AG04449 (cell line): ENCODE measurements at regions of chr3 and their contacts with region 1.

Region 1: DNA sequence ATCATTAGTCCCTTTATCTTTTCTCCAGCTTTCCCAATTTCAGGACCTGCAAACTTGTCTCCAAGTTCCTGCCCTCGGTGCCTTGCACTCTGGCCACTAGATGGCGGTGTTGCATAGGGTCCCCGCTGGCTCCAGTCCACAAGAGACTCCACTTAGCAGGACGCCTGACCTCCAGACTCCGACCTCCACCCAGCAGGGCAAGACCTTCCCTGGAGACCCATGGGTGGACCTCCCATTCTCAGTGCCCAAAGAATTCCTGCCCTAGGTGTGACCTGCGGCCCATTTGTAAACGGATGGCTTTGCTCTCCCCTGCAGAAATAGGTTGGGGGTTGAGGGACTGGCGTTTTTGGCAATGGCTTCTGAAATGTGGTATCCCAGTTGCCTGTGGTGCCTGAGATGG is 82.6 kb downstream of the LSM3 start:
- DNase-seq: no peak
- H3K4me3 ChIP-seq: no peak overlapping the region; the same call in 1 of the 2 replicates
- CTCF ChIP-seq: peak; percentile 97

Region 2: DNA sequence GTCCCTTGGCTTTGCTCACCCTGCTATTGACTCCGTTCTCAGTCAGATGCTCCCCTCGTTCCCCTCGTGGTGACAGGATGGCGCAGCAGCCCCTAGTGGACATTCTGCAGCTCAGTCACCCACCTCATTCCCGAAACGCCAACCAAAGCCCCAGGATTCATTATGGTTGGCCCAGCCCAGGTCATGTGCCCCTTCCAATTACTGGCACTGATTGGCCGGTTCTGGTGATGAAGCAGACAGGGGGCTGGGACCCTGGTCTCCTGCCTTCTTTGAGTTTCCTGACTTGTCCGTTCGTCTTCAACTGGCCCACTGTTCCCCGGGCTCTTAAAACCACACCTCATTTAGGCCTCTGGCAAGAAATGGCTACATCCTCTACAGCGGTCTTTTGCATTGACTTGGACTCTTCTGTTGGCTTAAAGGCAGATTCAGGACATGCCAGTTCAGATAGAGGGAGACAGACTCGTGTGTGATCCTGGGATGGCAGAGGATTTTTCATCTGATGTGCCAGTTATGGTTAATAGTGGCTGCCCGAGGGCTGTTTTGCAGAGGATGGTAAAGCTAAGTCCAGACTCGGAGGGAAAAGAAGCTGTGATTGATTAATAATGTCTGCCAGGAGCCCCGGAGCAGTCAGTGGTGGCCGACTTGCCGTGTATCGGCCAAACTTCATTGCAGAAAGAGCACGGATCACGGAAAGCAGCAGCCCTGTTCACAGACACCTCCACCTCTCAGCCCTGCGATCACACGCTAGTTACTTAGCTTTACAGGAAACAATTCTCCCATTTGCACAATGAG is 44.8 kb before region 1 on chr3:
- CTCF ChIA-PET with region 1: interaction called, 40 read pairs
- POLR2A ChIA-PET with region 1: no interaction called
- DNase-seq: no peak
- H3K4me3 ChIP-seq: no peak overlapping the region
- CTCF ChIP-seq: no peak

Region 3: DNA sequence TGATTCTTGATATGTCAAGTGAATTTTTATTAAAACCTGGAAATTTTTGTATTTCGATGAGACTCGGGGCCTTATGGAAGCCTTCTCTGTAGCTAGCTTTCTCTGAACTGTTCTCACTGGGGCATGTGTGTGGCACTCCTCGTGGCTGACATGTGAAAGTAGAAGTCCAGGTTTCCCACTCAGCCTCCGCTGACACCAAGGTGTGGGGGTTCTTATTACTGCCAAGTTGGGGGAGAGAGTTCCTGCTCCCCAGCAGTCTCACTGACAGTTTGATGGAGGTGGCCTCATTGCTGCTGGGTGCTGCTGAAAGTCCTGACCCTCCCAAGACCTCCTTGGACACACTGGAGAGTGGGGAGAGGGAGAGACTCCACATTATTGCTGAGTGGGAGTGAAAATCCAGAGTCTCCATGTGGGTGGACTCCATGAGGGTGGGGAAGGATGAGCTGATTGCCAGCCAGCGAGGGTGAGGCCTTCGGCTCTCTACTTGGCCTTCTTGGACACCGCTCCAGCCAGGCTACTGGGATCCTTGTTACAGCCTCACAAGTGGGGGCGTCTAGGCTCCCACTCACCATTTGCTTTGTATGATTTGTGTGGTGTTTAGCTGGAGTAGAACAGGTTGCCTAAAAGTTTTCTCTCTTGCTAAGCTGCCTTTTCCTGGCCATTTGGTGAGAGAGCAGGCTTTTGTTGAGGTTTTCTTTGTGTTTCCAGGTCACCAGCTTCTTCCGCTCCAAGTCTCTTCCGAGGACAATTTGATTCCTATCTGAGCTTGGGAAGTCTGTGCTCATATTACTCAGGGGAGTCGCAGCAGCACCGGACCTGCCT is 18.5 kb before region 1 on chr3:
- CTCF ChIA-PET with region 1: interaction called, 14 read pairs
- POLR2A ChIA-PET with region 1: no interaction called
- DNase-seq: no peak
- H3K4me3 ChIP-seq: no peak overlapping the region
- CTCF ChIP-seq: no peak

Region 4: GRCh38 chr3:14289590-14290461 is 28.6 kb after region 1 on chr3:
- CTCF ChIA-PET with region 1: interaction called, 12 read pairs
- POLR2A ChIA-PET with region 1: no interaction called
- DNase-seq: peak; percentile 84
- H3K4me3 ChIP-seq: no peak overlapping the region
- CTCF ChIP-seq: no peak

Region 5: DNA sequence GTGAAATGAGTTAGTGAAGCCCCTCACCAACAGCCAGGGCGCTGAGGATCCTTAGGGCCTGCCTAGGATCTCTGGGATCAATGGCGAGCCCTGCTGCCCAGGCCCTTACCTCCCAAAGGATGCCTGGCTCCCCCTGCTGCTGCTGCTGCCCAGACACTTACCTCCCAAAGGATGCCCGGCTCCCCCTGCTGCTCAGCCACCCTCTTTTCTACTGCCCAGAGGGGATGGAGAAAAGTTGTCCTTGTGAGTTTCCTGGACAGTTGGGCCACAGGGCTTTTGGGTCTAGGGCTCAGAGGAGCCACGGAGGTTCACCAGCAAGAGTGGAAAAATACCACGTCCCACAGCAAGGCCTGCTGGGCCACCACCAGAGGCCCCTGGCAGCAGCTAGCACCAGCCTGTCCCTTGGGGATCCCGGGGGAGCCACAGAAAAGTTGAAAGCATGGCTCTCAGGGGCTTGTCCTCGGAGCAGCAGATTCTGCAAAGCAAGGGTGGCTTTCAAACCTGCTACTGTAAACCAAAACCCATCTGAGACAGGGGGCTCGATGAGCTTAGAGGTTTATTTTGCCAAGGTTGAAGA is 200.6 kb after region 1 on chr3:
- CTCF ChIA-PET with region 1: interaction called, 188 read pairs
- POLR2A ChIA-PET with region 1: no interaction called
- DNase-seq: no peak
- H3K4me3 ChIP-seq: no peak overlapping the region
- CTCF ChIP-seq: peak; percentile 91

Region 6: DNA sequence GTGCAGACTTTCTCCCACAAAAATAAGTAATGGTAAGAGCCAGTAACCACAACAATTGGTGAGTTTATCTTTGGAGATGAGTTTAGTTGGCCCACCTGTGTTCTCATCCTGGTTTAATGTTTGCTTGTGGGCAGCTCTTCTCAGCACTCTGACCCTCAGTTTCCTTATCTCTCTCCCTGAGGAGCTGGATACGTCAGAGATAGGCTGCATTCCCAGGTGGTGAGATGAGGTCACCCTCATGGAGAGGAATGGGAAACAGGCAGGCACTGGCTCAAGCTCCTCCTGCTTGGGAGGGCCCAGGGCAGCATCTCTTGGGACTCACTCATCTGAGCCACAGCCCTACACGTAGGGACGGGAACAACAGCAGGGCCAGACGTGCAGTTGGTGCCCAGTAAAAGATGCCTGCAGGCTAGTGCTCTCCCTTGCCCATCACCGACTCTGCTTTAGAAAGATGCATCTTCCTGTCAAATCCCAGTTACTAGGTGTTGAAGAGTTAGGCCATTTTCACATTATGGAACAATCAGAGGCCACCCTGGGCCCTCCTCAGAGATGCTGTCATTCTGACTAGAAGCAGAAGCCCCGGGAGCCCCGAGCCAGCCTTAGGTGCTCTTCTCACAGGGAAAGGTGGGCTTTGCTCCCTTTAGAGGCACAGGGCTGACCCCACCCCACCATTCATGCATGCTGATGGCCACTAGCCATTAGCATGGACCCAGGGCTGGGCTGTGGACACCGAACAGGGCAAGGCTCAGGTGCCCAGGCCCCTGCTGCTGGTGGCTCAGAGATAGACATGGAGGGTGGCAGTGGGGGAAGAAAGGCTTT is 219.2 kb after region 1 on chr3:
- CTCF ChIA-PET with region 1: interaction called, 19 read pairs
- POLR2A ChIA-PET with region 1: no interaction called
- DNase-seq: no peak
- H3K4me3 ChIP-seq: no peak overlapping the region
- CTCF ChIP-seq: no peak